Sigmoid colon (tissue), 7 donors: ENCODE measurements at regions of chr16 and their contacts with region 1.

Region 1: GRCh38 chr16:56608043-56608875 is at the start of gene MT2A:
- DNase-seq: peak; percentile 98
- H3K4me3 ChIP-seq: peak within 1 kb of the TSS; percentile 47 to 62 (median 54)
- H3K27ac ChIP-seq: peak within 1 kb of the TSS; percentile 86 to 93 (median 89)
- H3K4me1 ChIP-seq: peaks cover 0 to 44% (median 44%) of the 10 kb centered on the region in 4 donors
- H3K27me3 ChIP-seq: no peaks in the 10 kb centered on the region
- CTCF ChIP-seq: no peak
- EP300 ChIP-seq: peak; percentile 5 to 87 (median 40)
- POLR2A ChIP-seq: peak; percentile 67 to 88
- total RNA-seq, gene MT2A: 37.5 to 161 (median 96.0) TPM

Region 2: DNA sequence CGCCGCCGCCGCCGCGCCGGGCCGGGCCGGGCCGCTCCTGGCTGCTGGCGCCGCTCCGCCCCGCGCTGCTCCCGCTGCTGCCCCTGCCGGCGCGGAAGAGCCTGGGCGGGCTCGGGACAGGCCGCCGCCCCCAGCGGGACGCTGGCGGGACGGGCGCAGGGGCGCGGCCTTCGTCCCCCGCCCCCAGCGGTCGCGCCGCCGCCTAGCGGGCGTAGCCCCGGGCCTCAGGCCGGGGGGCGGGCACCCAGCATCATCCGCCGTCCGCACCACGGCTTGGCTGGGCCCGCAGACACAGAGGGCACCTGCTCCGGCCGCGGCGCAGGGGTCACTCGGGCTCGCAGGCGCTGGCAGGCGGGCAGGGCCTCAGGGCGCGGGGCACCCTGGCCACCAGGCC is 182.8 kb before region 1 on chr16 and contains the start of gene AMFR:
- intact Hi-C with region 1: loop called (anchors 10 kb)
- DNase-seq: peak; percentile 79
- H3K4me3 ChIP-seq: peak within 1 kb of the TSS; percentile 83 to 98 (median 88)
- H3K27ac ChIP-seq: peak within 1 kb of the TSS; percentile 89 to 97 (median 92)
- H3K4me1 ChIP-seq: peaks cover 0 to 45% (median 30%) of the 10 kb centered on the region in 4 donors
- H3K27me3 ChIP-seq: no peaks in the 10 kb centered on the region
- CTCF ChIP-seq: peak in 2 of 4 experiments; percentile 25 to 48
- EP300 ChIP-seq: no peak
- POLR2A ChIP-seq: no peak
- total RNA-seq, gene AMFR: 111 to 201 (median 149) TPM

Region 3: GRCh38 chr16:56625140-56625942 is 17.1 kb after region 1 on chr16 and contains the start of gene MT1E:
- intact Hi-C with region 1: loop called (anchors 1 kb)
- DNase-seq: peak; percentile 95
- H3K4me3 ChIP-seq: peak within 1 kb of the TSS; percentile 52 to 68 (median 58)
- H3K27ac ChIP-seq: peak within 1 kb of the TSS; percentile 89 to 92 (median 90)
- H3K4me1 ChIP-seq: peaks cover 0 to 23% (median 19%) of the 10 kb centered on the region in 4 donors
- H3K27me3 ChIP-seq: no peaks in the 10 kb centered on the region
- CTCF ChIP-seq: no peak
- EP300 ChIP-seq: peak in 3 of 4 donors; percentile 52 to 87 (median 83)
- POLR2A ChIP-seq: peak; percentile 83 to 85
- total RNA-seq, gene MT1E: 96.9 to 295 (median 136) TPM

Region 4: GRCh38 chr16:56643080-56643778 is 35.0 kb after region 1 on chr16:
- intact Hi-C with region 1: loop called (anchors 5 kb)
- DNase-seq: peak; percentile 82
- H3K4me3 ChIP-seq: peak overlapping the region; percentile 6 to 38 (median 32)
- H3K27ac ChIP-seq: peak overlapping the region in 2 of 4 donors; percentile 39 to 52
- H3K4me1 ChIP-seq: peaks cover 0 to 21% (median 20%) of the 10 kb centered on the region in 4 donors
- H3K27me3 ChIP-seq: peaks cover 8 to 90% (median 35%) of the 10 kb centered on the region in 3 donors
- CTCF ChIP-seq: peak in 3 of 4 experiments; percentile 25 to 34 (median 33)
- EP300 ChIP-seq: peak in 2 of 4 donors; percentile 18 to 64
- POLR2A ChIP-seq: no peak

Region 5: DNA sequence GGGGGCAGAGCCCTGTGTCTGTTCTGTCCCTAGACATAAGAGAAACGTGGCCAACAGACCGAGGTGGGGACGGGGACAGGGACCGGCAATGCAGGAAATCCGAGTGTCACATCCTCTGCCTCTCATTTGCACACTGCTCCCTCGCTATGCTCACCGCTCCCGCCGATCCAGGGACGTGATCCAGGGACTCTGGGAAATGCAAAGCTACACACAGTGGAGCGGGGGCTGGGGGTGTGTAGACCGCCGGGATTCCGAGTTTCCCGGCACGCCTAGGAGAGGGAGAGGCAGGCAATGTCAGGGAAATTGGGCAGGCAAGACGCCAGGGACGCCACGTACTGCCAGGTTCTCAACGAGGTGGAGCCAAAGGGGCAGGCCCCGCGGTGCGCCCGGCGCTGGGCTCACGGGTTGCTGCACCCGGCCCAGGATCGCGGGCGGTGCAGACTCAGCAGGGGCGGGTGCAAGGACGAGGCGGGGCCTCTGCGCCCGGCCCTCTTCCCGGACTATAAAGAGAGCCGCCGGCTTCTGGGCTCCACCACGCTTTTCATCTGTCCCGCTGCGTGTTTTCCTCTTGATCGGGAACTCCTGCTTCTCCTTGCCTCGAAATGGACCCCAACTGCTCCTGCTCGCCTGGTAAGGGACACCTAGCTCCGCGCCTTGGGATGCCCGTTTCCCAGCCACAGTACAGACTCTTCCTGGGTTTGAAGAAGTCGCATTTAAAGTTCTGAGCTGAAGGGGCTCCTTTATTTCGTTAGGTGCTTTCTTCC is 73.9 kb after region 1 on chr16 and contains the start of gene MT1X:
- intact Hi-C with region 1: loop called (anchors 1 kb)
- DNase-seq: peak; percentile 98
- H3K4me3 ChIP-seq: peak within 1 kb of the TSS; percentile 44 to 66 (median 58)
- H3K27ac ChIP-seq: peak within 1 kb of the TSS; percentile 66 to 83 (median 80)
- H3K4me1 ChIP-seq: peaks cover 0 to 27% (median 22%) of the 10 kb centered on the region in 4 donors
- H3K27me3 ChIP-seq: peaks cover 0 to 1% (median 0%) of the 10 kb centered on the region in 3 donors
- CTCF ChIP-seq: no peak
- EP300 ChIP-seq: peak in 3 of 4 donors; percentile 67 to 88 (median 88)
- POLR2A ChIP-seq: peak; percentile 93
- total RNA-seq, gene MT1X: 90.3 to 1,592 (median 363) TPM